SK-N-SH (cell line): ENCODE measurements at regions of chr1 and their contacts with region 1.

Region 1: GRCh38 chr1:94039514-94039870 is 81.5 kb downstream of the ABCA4 start:
- DNase-seq: peak; percentile 74
- H3K4me3 ChIP-seq: no peak overlapping the region; a peak in 1 of 4 replicates
- H3K27ac ChIP-seq: peak overlapping the region; percentile 55 to 72; a peak in 3 of 4 replicates
- H3K4me1 ChIP-seq: peaks cover 17 to 23% of the 10 kb centered on the region in 2 experiments; a peak in 3 of 4 replicates
- H3K27me3 ChIP-seq: no peaks in the 10 kb centered on the region
- CTCF ChIP-seq: peak; percentile 97
- EP300 ChIP-seq: no peak
- RAD21 ChIP-seq: peak; percentile 66

Region 2: DNA sequence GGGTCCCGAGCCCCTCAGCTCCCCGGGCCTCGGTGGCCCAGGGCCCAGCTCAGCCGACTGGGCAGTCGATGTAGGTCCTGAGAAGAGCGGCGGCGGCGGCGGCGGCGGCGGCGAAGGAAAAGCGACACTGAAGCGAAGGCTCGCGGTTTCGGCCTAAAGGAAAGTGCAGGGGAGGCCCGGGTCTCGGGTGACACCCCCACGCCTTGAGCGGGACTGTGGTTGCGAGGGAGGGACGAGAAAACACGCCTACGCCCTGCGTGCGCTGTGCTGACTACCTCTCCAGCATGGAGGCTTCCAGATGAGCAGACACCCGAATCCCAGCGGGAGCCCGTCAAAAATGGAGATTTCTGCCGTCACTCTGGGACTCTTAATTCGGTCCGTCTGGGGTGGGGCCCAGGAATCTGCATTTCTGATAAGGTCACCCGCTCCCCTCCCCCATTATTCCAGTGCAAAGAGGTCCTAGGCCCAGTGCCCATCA is 191.6 kb before region 1 on chr1:
- CTCF ChIA-PET with region 1: no interaction called
- POLR2A ChIA-PET with region 1: no interaction called
- DNase-seq: peak; percentile 77
- H3K4me3 ChIP-seq: peak overlapping the region; percentile 85 to 94
- H3K27ac ChIP-seq: peak overlapping the region; percentile 88 to 96
- H3K4me1 ChIP-seq: peaks cover 18% of the 10 kb centered on the region in 2 experiments; a peak in 3 of 4 replicates
- H3K27me3 ChIP-seq: no peaks in the 10 kb centered on the region
- CTCF ChIP-seq: no peak
- EP300 ChIP-seq: peak in 1 of 2 experiments; percentile 48; a peak in 1 of 4 replicates
- RAD21 ChIP-seq: 0 out of 2 replicates have a peak, but pooled peaks have one; percentile 10

Region 3: GRCh38 chr1:94006604-94007003 is 32.9 kb before region 1 on chr1:
- CTCF ChIA-PET with region 1: interaction called, 11 read pairs
- POLR2A ChIA-PET with region 1: no interaction called
- DNase-seq: no peak
- H3K4me3 ChIP-seq: no peak overlapping the region
- H3K27ac ChIP-seq: no peak overlapping the region
- H3K4me1 ChIP-seq: peaks cover 0 to 9% of the 10 kb centered on the region in 2 experiments; a peak in 1 of 4 replicates
- H3K27me3 ChIP-seq: no peaks in the 10 kb centered on the region
- CTCF ChIP-seq: no peak
- EP300 ChIP-seq: no peak
- RAD21 ChIP-seq: no peak

Region 4: DNA sequence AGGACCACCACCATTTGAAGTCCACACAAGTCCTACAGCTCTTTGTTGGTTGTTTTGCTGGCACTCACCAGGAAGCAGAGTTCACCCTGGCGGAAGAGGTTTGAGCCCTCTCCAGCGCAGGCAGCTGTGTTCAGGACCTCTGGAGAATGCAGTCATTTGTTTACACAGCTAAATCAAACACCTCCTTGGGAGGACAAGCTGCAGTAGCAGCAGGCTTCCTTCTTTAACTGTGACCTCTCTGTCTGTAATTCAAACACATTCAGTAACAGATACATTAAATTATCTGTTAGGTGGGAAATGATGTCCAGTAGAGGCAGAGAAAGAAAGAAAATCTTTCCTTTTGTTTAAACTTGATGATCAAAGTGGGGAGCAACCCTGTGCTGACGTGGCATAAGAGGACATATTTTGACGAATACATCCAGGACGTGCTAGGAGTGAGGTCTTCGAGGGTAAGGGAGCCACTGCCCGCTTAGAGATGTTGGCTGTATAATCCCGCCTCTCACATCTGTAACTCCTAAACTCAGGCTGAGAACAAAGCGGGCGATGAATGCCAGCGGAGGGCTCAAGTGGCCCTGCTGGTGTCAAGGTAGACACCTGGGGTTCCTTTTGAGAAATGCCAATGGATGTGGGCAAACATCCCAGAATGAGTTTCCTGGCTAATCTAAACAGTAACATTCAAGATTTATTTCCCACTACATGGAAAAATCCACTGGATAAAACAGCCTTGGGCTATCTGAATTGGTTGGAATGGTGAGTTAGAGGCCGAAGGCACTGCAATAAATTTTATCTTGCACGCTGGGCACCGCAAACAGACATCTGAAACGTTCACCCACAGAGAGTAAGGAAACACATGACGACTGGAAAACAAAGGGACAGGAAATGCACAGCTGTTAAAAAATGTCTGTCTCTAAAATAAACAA is 29.8 kb after region 1 on chr1:
- CTCF ChIA-PET with region 1: interaction called, 299 read pairs
- POLR2A ChIA-PET with region 1: interaction called, 3 read pairs
- DNase-seq: no peak
- H3K4me3 ChIP-seq: no peak overlapping the region
- H3K27ac ChIP-seq: no peak overlapping the region
- H3K4me1 ChIP-seq: peaks cover 14 to 36% of the 10 kb centered on the region in 2 experiments; a peak in 3 of 4 replicates
- H3K27me3 ChIP-seq: no peaks in the 10 kb centered on the region
- CTCF ChIP-seq: no peak
- EP300 ChIP-seq: no peak
- RAD21 ChIP-seq: no peak

Region 5: DNA sequence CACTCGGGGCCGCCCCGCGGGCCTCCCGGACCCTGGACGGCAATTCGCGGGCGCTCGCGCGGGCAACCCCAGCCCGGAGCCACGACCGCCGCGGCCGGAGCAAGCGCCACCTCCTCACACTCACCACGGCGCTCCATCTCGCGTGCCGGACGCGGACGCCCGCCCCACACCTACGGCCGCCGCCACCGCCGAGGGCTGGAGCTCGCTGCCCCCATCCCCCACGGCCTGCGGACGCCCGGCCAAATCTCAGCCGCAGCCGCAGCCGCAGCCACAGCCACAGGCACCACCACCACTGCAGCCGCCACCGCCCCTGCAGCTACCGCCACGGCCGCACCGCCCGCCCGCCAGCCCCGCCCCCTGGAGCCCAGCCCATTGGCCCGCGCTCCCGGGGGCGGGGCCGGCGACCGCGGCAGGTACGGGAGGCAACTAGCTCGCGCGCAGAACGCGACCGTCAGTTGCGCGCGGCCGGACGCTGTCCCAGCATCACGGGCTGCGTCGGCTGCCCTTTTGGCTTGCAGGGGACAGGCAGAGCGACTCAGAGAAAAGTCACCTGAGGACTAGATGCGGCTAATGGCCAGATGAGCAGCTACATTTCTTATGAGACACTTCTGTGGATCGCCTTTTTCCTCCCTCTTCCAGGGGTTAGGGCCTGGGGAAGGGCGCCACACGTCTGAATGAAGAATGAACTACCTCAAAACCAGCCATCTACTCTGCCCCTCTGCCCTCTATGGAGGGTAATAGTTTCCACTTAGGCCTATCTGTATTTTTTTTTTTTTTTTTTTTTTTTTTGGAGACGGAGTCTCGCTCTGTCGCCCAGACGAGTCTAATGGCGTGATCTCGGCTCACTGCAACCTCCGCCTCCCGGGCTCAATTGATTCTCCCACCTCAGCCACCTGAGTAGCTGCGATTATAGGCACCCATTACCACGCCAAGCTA is 198.1 kb after region 1 on chr1 and contains the start of gene ARHGAP29:
- CTCF ChIA-PET with region 1: interaction called, 40 read pairs
- POLR2A ChIA-PET with region 1: no interaction called
- DNase-seq: peak; percentile 96
- H3K4me3 ChIP-seq: peak within 1 kb of the TSS; percentile 89 to 93
- H3K27ac ChIP-seq: peak within 1 kb of the TSS; percentile 31 to 76
- H3K4me1 ChIP-seq: peaks cover 6 to 12% of the 10 kb centered on the region in 2 experiments; a peak in 2 of 4 replicates
- H3K27me3 ChIP-seq: no peaks in the 10 kb centered on the region
- CTCF ChIP-seq: no peak; the same call in 1 of the 2 replicates
- EP300 ChIP-seq: no peak
- RAD21 ChIP-seq: peak; percentile 31
- polyA plus RNA-seq, gene ARHGAP29: 20.1 and 23.3 TPM in 2 replicates

Region 6: GRCh38 chr1:94345148-94345721 is 305.7 kb after region 1 on chr1:
- CTCF ChIA-PET with region 1: interaction called, 20 read pairs
- POLR2A ChIA-PET with region 1: no interaction called
- DNase-seq: no peak
- H3K4me3 ChIP-seq: no peak overlapping the region
- H3K27ac ChIP-seq: no peak overlapping the region
- H3K4me1 ChIP-seq: no peaks in the 10 kb centered on the region; a peak in 1 of 4 replicates
- H3K27me3 ChIP-seq: peaks cover 1% of the 10 kb centered on the region; the same call in 1 of the 2 replicates
- CTCF ChIP-seq: no peak
- EP300 ChIP-seq: no peak
- RAD21 ChIP-seq: no peak